Prostate gland (tissue), 2 donors: ENCODE measurements at regions of chr10 and their contacts with region 1.

Region 1: DNA sequence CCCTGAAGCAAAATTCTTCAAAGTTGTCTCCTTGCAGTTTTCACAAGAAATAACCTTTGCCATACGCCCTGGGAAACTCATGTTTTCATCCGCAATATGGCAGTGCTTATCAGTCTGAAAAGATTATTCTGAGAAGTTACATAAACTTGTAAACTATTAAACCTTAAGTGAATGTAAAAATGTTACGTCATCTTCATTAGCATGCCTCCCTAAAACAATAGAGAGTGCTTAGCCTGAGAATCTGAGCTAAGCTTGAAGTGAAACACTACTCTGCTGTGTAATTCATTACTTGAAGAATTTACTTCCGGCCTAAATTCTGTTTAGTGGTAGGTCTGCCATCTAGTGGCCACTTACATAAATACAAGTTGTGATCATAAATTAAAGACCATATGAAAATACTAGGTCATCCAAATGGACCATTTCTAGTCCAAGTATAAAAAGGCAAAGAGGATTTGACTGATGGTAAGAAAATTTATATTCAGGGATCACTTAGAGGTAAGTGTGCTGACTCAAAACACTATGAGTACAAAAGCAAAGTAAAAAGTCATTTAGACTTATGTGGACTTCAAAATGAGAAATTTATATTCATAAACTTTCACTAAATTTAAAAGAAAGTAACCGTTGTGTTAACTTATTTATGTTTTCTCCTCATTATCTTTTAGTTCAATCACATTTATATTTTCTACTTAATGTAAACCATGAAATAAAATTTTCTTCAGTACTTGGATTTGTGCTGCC is 745.1 kb upstream of the LRRTM3 start:
- DNase-seq: peak; percentile 22
- H3K4me3 ChIP-seq: no peak overlapping the region
- H3K27ac ChIP-seq: no peak overlapping the region
- H3K4me1 ChIP-seq: no peaks in the 10 kb centered on the region
- H3K27me3 ChIP-seq: no peaks in the 10 kb centered on the region
- CTCF ChIP-seq: peak in 3 of 4 experiments; percentile 66 to 81 (median 66)
- POLR2A ChIP-seq: no peak

Region 2: GRCh38 chr10:65358565-65358964 is 822.2 kb before region 1 on chr10:
- intact Hi-C with region 1: loop called (anchors 10 kb)
- DNase-seq: no peak
- H3K4me3 ChIP-seq: no peak overlapping the region
- H3K27ac ChIP-seq: no peak overlapping the region
- H3K4me1 ChIP-seq: no peaks in the 10 kb centered on the region
- H3K27me3 ChIP-seq: no peaks in the 10 kb centered on the region
- CTCF ChIP-seq: no peak
- POLR2A ChIP-seq: no peak

Region 3: DNA sequence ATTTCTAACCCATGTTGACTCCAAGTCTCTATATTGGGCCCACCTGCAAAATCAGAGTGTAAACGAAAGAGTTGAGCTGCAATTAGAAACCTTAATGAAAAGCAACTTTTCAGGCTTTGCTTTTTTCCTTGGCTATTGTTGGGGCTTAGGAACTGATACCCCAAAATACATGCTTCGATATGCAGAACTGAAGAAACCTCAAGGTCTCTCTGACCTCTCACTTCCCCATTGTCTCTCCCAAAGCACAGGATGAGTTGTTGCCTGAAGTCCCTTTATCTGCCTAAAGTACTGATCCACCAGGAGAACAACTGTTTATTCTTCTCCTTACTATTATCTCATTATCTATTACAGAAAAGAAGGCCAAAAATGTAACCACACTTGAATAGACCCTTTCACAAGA is 79.1 kb after region 1 on chr10:
- intact Hi-C with region 1: no loop called
- DNase-seq: no peak
- H3K4me3 ChIP-seq: no peak overlapping the region
- H3K27ac ChIP-seq: no peak overlapping the region
- H3K4me1 ChIP-seq: no peaks in the 10 kb centered on the region
- H3K27me3 ChIP-seq: no peaks in the 10 kb centered on the region
- CTCF ChIP-seq: no peak
- POLR2A ChIP-seq: no peak

Region 4: GRCh38 chr10:66349726-66350125 is 169.0 kb after region 1 on chr10:
- intact Hi-C with region 1: no loop called
- DNase-seq: no peak
- H3K4me3 ChIP-seq: no peak overlapping the region
- H3K27ac ChIP-seq: no peak overlapping the region
- H3K4me1 ChIP-seq: no peaks in the 10 kb centered on the region
- H3K27me3 ChIP-seq: no peaks in the 10 kb centered on the region
- CTCF ChIP-seq: no peak
- POLR2A ChIP-seq: no peak

Region 5: GRCh38 chr10:66637273-66638036 is 456.7 kb after region 1 on chr10:
- intact Hi-C with region 1: no loop called
- DNase-seq: no peak
- H3K4me3 ChIP-seq: no peak overlapping the region
- H3K27ac ChIP-seq: no peak overlapping the region
- H3K4me1 ChIP-seq: no peaks in the 10 kb centered on the region
- H3K27me3 ChIP-seq: no peaks in the 10 kb centered on the region
- CTCF ChIP-seq: no peak
- POLR2A ChIP-seq: no peak